ENCODE measurements at regions of chr5 and their contacts with region 1.

Region 1: GRCh38 chr5:7391814-7392692 is 3.9 kb upstream of the ADCY2 start:
- DNase-seq: peak; percentile 43
- H3K4me3 ChIP-seq: no peak overlapping the region
- H3K27ac ChIP-seq: peak overlapping the region; percentile 44
- H3K4me1 ChIP-seq: peaks cover 3% of the 10 kb centered on the region
- H3K27me3 ChIP-seq: peaks cover 19% of the 10 kb centered on the region
- CTCF ChIP-seq: peak; percentile 58

Region 2: GRCh38 chr5:6765612-6766525 is 626.2 kb before region 1 on chr5:
- intact Hi-C with region 1: loop called (anchors 5 kb)
- DNase-seq: peak; percentile 89
- H3K4me3 ChIP-seq: peak overlapping the region; percentile 4
- H3K27ac ChIP-seq: peak overlapping the region; percentile 74
- H3K4me1 ChIP-seq: peaks cover 7% of the 10 kb centered on the region
- H3K27me3 ChIP-seq: no peaks in the 10 kb centered on the region
- CTCF ChIP-seq: peak; percentile 85

Region 3: DNA sequence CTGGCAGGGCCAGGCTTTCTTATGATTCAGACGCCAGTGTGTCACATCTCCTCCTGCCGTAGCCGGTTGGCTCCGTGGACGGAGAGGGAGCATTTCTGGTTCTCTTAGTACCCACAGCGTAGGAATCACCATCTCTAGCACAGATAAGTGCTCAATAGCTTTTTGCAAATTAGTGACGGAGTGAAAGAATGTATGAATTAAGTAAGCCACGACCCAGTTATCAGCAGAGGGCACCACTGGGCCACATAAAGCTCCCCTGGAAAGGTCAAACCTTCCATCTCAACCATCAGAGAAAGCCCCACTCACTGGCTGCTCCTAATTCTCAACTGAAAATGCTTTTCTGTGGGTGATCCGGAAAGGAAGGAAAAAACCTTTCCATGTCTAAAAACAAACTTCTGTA is 313.2 kb before region 1 on chr5:
- intact Hi-C with region 1: loop called (anchors 10 kb)
- DNase-seq: peak; percentile 20
- H3K4me3 ChIP-seq: no peak overlapping the region
- H3K27ac ChIP-seq: no peak overlapping the region
- H3K4me1 ChIP-seq: no peaks in the 10 kb centered on the region
- H3K27me3 ChIP-seq: peaks cover 3% of the 10 kb centered on the region
- CTCF ChIP-seq: peak; percentile 11

Region 4: DNA sequence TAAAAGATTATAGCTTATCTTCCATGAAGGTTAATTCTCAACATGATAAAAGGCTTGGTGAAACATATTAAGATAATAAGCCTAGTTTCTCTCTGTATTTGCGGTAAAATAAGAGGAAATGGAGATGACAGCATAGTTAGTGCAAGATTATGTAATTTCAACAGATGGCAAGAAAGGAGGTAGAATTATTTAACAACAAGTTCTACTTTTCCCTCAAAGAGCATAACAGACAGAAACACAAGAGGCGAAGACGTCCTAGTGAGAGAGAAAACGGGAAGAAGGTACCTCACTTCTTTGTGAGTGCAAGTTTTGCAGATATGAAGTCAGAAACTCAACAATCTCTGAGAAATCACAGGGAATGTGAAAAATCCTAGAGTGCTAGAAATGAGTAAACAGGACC is 140.9 kb before region 1 on chr5:
- intact Hi-C with region 1: loop called (anchors 10 kb)
- DNase-seq: no peak
- H3K4me3 ChIP-seq: no peak overlapping the region
- H3K27ac ChIP-seq: no peak overlapping the region
- H3K4me1 ChIP-seq: no peaks in the 10 kb centered on the region
- H3K27me3 ChIP-seq: no peaks in the 10 kb centered on the region
- CTCF ChIP-seq: no peak

Region 5: GRCh38 chr5:7754992-7755596 is 363.0 kb after region 1 on chr5:
- intact Hi-C with region 1: loop called (anchors 10 kb)
- DNase-seq: peak; percentile 57
- H3K4me3 ChIP-seq: no peak overlapping the region
- H3K27ac ChIP-seq: no peak overlapping the region
- H3K4me1 ChIP-seq: no peaks in the 10 kb centered on the region
- H3K27me3 ChIP-seq: no peaks in the 10 kb centered on the region
- CTCF ChIP-seq: peak; percentile 69